Pancreas (tissue), 10 donors: ENCODE measurements at regions of chr7 and their contacts with region 1.

Region 1: DNA sequence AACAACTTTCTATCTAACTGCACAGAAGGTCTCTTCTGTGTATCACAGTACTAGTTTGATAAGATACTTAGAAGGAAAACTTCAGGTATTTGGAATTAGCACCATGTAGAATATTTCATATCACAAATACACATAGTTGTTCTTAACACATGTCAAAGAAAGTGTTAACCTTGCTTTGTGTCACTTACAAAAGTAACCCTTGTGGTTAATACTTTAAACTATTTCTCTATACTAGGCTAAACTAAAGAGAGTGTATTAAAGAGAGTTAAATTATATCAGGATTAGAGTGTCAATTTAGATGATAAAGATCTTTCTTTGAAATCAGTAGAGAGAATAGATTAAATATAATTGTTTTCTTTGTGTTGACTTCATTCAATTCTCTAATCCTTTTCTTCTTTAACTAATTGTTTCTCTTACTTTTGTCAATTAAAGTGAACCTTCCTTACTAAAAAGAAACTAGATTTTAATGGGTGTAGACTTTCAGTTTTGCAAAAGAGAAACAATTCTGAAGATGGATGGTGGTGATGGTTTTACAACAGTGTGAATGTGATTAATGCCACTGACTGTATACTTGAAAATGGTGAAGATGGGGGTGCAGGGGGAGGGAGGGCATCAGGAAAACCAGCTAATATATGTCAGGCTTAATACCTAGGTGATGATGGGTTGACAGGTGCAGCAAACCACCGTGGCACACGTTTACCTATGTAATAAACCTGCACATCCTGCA is 67.8 kb downstream of the CHN2 start:
- DNase-seq: no peak
- ATAC-seq: no peak
- H3K4me3 ChIP-seq: no peak overlapping the region
- H3K27ac ChIP-seq: no peak overlapping the region
- H3K4me1 ChIP-seq: peaks cover 3 to 7% (median 4%) of the 10 kb centered on the region in 3 donors
- H3K27me3 ChIP-seq: no peaks in the 10 kb centered on the region
- CTCF ChIP-seq: no peak

Region 2: DNA sequence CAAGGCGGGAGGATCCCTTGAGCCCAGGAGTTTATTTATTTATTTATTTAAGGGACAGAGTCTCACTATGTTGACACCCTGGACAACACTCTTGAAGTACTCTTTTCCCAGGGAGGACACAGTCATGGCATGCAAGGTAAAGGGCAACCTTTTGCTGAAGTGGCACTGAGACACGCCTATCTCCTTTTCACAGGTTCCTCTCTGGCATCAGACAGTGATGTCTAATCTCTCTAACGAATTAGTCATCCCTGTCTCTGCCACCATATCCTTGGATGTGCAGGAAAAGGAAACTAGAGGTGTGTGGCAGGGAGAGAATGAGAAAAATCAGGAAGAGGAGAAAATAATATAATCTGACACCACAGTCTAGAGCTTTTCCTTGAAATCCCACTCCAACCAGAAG is 135.6 kb before region 1 on chr7:
- intact Hi-C with region 1: loop called in 1 of 3 experiments (anchors 5 kb)
- DNase-seq: no peak
- ATAC-seq: no peak
- H3K4me3 ChIP-seq: no peak overlapping the region
- H3K27ac ChIP-seq: no peak overlapping the region
- H3K4me1 ChIP-seq: no peaks in the 10 kb centered on the region
- H3K27me3 ChIP-seq: no peaks in the 10 kb centered on the region
- CTCF ChIP-seq: no peak

Region 3: GRCh38 chr7:30594549-30595435 is 1332.4 kb after region 1 on chr7 and contains the start of gene GARS1:
- intact Hi-C with region 1: no loop called
- DNase-seq: peak; percentile 84 to 95 (median 90)
- ATAC-seq: peak; percentile 92 to 97 (median 96)
- H3K4me3 ChIP-seq: peak within 1 kb of the TSS; percentile 79 to 98 (median 95)
- H3K27ac ChIP-seq: peak within 1 kb of the TSS; percentile 92 to 96 (median 94)
- H3K4me1 ChIP-seq: peaks cover 12 to 18% (median 14%) of the 10 kb centered on the region in 3 donors
- H3K27me3 ChIP-seq: no peaks in the 10 kb centered on the region
- CTCF ChIP-seq: no peak
- total RNA-seq, gene GARS1: 34.0 to 191 (median 39.7) TPM